ENCODE measurements at regions of chr16 and their contacts with region 1.

Region 1: DNA sequence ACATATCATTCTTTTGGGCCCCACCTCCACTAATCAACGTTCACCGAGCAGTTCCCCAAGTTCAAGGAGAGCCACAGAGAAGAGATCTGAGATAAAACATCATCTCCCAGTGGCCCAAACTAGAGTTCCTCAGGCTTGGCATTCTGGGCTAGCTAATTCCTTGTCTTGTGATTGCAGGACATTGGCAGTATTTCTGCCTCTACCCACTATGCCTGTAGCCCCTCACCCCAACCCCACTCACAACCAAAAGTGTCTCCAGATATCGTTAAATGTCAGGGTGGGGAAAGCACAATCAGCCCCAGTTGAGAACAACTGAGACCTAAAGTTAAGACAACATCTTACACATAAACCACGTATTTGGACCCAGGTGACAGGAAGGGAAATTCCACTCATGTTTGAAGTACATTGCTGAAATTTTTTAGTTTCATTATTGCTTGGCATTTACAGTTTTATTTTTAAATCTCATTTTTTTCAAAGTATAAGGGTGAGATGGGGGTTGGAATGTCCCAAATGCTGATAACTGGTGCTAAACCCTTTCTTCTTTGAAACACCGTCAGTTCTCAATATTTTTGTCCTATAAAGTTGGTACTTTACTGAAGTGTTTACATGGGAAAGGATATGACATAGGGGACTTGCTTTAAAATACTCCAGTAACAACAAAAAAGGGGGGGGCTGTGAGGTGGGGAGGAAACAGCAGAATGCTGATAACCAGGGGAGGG is 13.6 kb downstream of the ZC3H7A start:
- DNase-seq: peak in 10 of 14 experiments; percentile 19 to 91 (median 34)
- ATAC-seq: peak; percentile 80
- H3K4me3 ChIP-seq: peak overlapping the region; percentile 49
- H3K4me3 Mint-ChIP-seq: peak overlapping the region; percentile 76
- H3K27ac ChIP-seq: peak overlapping the region; percentile 95 to 98
- H3K27ac Mint-ChIP-seq: peak overlapping the region; percentile 94
- H3K4me1 ChIP-seq: peaks cover 66% of the 10 kb centered on the region
- H3K4me1 Mint-ChIP-seq: peaks cover 63% of the 10 kb centered on the region
- H3K27me3 ChIP-seq: no peaks in the 10 kb centered on the region
- H3K27me3 Mint-ChIP-seq: no peaks in the 10 kb centered on the region
- CTCF ChIP-seq: no peak

Region 2: GRCh38 chr16:11742539-11743307 is 40.8 kb before region 1 on chr16 and contains the start of gene TXNDC11:
- CTCF ChIA-PET with region 1: no interaction called
- POLR2A ChIA-PET with region 1: interaction called, 50 read pairs
- intact Hi-C with region 1: loop called in 1 of 2 experiments (anchors 1 kb)
- DNase-seq: peak; percentile 98 to 100 (median 99)
- ATAC-seq: peak; percentile 92
- H3K4me3 ChIP-seq: peak within 1 kb of the TSS; percentile 95
- H3K4me3 Mint-ChIP-seq: peak within 1 kb of the TSS; percentile 96
- H3K27ac ChIP-seq: peak within 1 kb of the TSS; percentile 86 to 92
- H3K27ac Mint-ChIP-seq: peak within 1 kb of the TSS; percentile 99
- H3K4me1 ChIP-seq: peaks cover 52% of the 10 kb centered on the region
- H3K4me1 Mint-ChIP-seq: peaks cover 60% of the 10 kb centered on the region
- H3K27me3 ChIP-seq: no peaks in the 10 kb centered on the region
- H3K27me3 Mint-ChIP-seq: no peaks in the 10 kb centered on the region
- CTCF ChIP-seq: no peak
- total RNA-seq, gene TXNDC11: 111 to 112 TPM

Region 3: GRCh38 chr16:11748404-11749254 is 34.8 kb before region 1 on chr16:
- CTCF ChIA-PET with region 1: no interaction called
- POLR2A ChIA-PET with region 1: interaction called, 50 read pairs
- intact Hi-C with region 1: loop called in 1 of 2 experiments (anchors 2 kb)
- DNase-seq: no peak
- ATAC-seq: no peak
- H3K4me3 ChIP-seq: no peak overlapping the region
- H3K4me3 Mint-ChIP-seq: no peak overlapping the region
- H3K27ac ChIP-seq: no peak overlapping the region
- H3K27ac Mint-ChIP-seq: peak overlapping the region; percentile 65
- H3K4me1 ChIP-seq: peaks cover 5% of the 10 kb centered on the region
- H3K4me1 Mint-ChIP-seq: peaks cover 11% of the 10 kb centered on the region
- H3K27me3 ChIP-seq: no peaks in the 10 kb centered on the region
- H3K27me3 Mint-ChIP-seq: no peaks in the 10 kb centered on the region
- CTCF ChIP-seq: no peak

Region 4: GRCh38 chr16:11768849-11769248 is 14.6 kb before region 1 on chr16:
- CTCF ChIA-PET with region 1: no interaction called
- POLR2A ChIA-PET with region 1: interaction called, 3 read pairs
- intact Hi-C with region 1: loop called in 1 of 2 experiments (anchors 1 kb)
- DNase-seq: no peak
- ATAC-seq: no peak
- H3K4me3 ChIP-seq: no peak overlapping the region
- H3K4me3 Mint-ChIP-seq: no peak overlapping the region
- H3K27ac ChIP-seq: peak overlapping the region in 1 of 2 donors; percentile 2
- H3K27ac Mint-ChIP-seq: peak overlapping the region; percentile 58
- H3K4me1 ChIP-seq: no peaks in the 10 kb centered on the region
- H3K4me1 Mint-ChIP-seq: peaks cover 16% of the 10 kb centered on the region
- H3K27me3 ChIP-seq: no peaks in the 10 kb centered on the region
- H3K27me3 Mint-ChIP-seq: no peaks in the 10 kb centered on the region
- CTCF ChIP-seq: no peak

Region 5: DNA sequence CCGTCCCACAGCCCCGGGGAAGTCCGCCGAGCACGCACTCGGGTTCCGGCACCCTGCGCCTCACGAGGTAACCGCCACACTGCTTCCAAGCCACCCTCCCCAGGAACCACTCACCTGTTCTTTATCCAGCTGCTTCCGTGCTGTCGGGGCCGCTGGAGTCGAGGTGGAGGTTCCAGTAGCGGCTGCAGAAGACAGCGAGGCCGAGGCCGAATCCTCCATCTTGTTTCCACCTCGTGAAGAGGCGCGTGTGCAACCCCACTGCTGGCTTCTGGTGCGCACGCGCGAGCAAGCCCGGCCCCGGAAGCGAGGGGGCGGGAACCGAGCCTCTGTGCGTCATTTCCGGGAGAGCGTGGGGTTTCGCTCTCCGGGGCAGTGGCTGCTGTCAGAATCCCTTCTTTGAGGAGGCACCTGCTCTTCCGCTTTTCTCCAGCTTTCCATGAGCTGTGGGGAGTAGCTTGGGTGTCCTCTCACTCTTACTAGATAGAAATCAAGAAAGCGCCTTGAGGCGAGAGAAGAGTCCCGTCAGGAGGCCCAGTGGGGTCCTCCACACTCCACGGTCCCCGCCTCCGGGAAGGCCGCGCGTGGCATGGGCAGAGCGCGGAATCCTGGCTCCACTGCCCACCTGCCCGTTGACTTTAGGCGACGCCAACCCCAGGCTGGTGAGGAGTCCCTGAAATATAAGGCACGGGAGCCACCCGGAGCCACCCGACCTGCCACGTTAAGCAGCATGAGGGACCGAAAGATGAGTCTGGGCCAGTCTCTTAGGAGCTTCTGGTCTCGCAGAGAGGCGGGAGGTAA is 68.0 kb after region 1 on chr16 and contains the start of gene RSL1D1:
- CTCF ChIA-PET with region 1: no interaction called
- POLR2A ChIA-PET with region 1: no interaction called
- intact Hi-C with region 1: loop called in 1 of 2 experiments (anchors 5 kb)
- DNase-seq: peak; percentile 87 to 98 (median 92)
- ATAC-seq: peak; percentile 85
- H3K4me3 ChIP-seq: peak within 1 kb of the TSS; percentile 75
- H3K4me3 Mint-ChIP-seq: peak within 1 kb of the TSS; percentile 97
- H3K27ac ChIP-seq: peak within 1 kb of the TSS; percentile 78 to 86
- H3K27ac Mint-ChIP-seq: peak within 1 kb of the TSS; percentile 96
- H3K4me1 ChIP-seq: peaks cover 42% of the 10 kb centered on the region
- H3K4me1 Mint-ChIP-seq: peaks cover 68% of the 10 kb centered on the region
- H3K27me3 ChIP-seq: no peaks in the 10 kb centered on the region
- H3K27me3 Mint-ChIP-seq: no peaks in the 10 kb centered on the region
- CTCF ChIP-seq: no peak
- total RNA-seq, gene RSL1D1: 224 to 237 TPM

Region 6: GRCh38 chr16:12079412-12079965 is 296.0 kb after region 1 on chr16:
- CTCF ChIA-PET with region 1: no interaction called
- POLR2A ChIA-PET with region 1: no interaction called
- intact Hi-C with region 1: loop called in 1 of 2 experiments (anchors 10 kb)
- DNase-seq: peak in 4 of 14 experiments; percentile 29 to 68 (median 44)
- ATAC-seq: peak; percentile 30
- H3K4me3 ChIP-seq: peak overlapping the region; percentile 43
- H3K4me3 Mint-ChIP-seq: peak overlapping the region; percentile 79
- H3K27ac ChIP-seq: peak overlapping the region; percentile 66 to 71
- H3K27ac Mint-ChIP-seq: peak overlapping the region; percentile 87
- H3K4me1 ChIP-seq: peaks cover 81% of the 10 kb centered on the region
- H3K4me1 Mint-ChIP-seq: peaks cover 85% of the 10 kb centered on the region
- H3K27me3 ChIP-seq: no peaks in the 10 kb centered on the region
- H3K27me3 Mint-ChIP-seq: no peaks in the 10 kb centered on the region
- CTCF ChIP-seq: no peak